T-cell (primary cell): ENCODE measurements at regions of chr2 and their contacts with region 1.

Region 1: DNA sequence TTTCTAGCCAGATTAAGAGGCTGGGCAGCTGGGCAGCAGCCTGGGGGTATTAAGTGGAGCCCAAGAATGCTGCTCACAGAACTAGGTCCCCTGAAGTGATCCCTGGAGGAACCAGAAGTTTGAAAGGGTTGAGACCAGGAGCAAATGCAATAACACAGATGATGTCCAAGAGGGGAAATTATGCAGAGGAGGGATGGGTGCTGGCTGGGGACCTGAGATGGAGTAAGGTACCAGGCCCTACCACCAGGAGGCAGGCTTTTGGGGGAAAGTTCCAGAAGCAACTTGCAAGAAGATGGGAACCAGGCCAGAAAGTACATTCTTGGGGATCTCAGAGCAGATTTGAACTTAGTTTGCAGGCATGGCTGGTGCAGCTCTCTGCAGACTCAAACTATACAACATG is 175.1 kb downstream of the NCK2 start:
- DNase-seq: peak; percentile 16 to 73 (median 47)
- ATAC-seq: peak; percentile 27 to 44 (median 36)
- H3K4me3 ChIP-seq: no peak overlapping the region
- H3K4me3 Mint-ChIP-seq: no peak overlapping the region
- H3K27ac ChIP-seq: no peak overlapping the region
- H3K27ac Mint-ChIP-seq: peak overlapping the region in 1 of 2 donors; percentile 81
- H3K4me1 ChIP-seq: peaks cover 10 to 19% of the 10 kb centered on the region in 2 experiments
- H3K4me1 Mint-ChIP-seq: peaks cover 48 to 57% (median 50%) of the 10 kb centered on the region in 3 donors
- H3K27me3 ChIP-seq: no peaks in the 10 kb centered on the region
- H3K27me3 Mint-ChIP-seq: no peaks in the 10 kb centered on the region

Region 2: GRCh38 chr2:105327690-105328089 is 592.1 kb before region 1 on chr2:
- CTCF ChIA-PET with region 1: no interaction called
- POLR2A ChIA-PET with region 1: interaction called in 1 of 2 experiments, 12 read pairs
- DNase-seq: no peak
- ATAC-seq: no peak
- H3K4me3 ChIP-seq: no peak overlapping the region
- H3K4me3 Mint-ChIP-seq: peak overlapping the region; percentile 84 to 97 (median 92)
- H3K27ac ChIP-seq: peak overlapping the region; percentile 70
- H3K27ac Mint-ChIP-seq: peak overlapping the region; percentile 86 to 88
- H3K4me1 ChIP-seq: peaks cover 6 to 34% of the 10 kb centered on the region in 2 experiments
- H3K4me1 Mint-ChIP-seq: peaks cover 60 to 64% (median 64%) of the 10 kb centered on the region in 3 donors
- H3K27me3 ChIP-seq: no peaks in the 10 kb centered on the region
- H3K27me3 Mint-ChIP-seq: no peaks in the 10 kb centered on the region